ENCODE measurements at regions of chr14 and their contacts with region 1.

Region 1: DNA sequence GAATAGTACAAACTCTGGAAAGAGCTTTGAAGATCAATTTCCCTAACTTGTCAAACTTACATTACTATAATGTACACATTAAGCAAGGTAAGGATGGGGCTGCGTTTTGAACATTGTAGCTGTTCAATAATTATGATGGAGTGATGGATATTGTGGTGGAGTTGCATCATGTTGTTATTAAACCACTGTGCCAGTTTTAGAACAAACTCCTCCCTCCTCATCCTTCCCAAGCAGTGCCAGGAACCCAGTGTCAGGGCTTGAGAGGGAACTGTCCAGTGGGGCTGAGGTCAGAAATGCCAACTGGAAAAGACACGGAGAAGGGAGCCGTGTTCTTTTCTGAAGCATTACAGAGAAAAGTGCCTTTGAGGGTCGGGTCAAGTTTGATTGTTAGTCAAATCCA is 31.9 kb upstream of the PAPOLA start:
- DNase-seq: no peak
- ATAC-seq: no peak
- H3K4me3 ChIP-seq: no peak overlapping the region
- H3K27ac ChIP-seq: no peak overlapping the region
- H3K4me1 ChIP-seq: no peaks in the 10 kb centered on the region
- H3K27me3 ChIP-seq: no peaks in the 10 kb centered on the region; a peak in 1 of 4 replicates
- CTCF ChIP-seq: no peak
- EP300 ChIP-seq: no peak
- POLR2A ChIP-seq: no peak
- RAD21 ChIP-seq: no peak

Region 2: GRCh38 chr14:96027431-96028355 is 442.6 kb before region 1 on chr14:
- CTCF ChIA-PET with region 1: no interaction called
- POLR2A ChIA-PET with region 1: no interaction called
- RAD21 ChIA-PET with region 1: no interaction called
- SMC1A ChIA-PET with region 1: no interaction called
- in situ Hi-C with region 1: no loop called
- intact Hi-C with region 1: no loop called
- DNase-seq: no peak
- ATAC-seq: no peak
- H3K4me3 ChIP-seq: no peak overlapping the region
- H3K27ac ChIP-seq: no peak overlapping the region
- H3K4me1 ChIP-seq: no peaks in the 10 kb centered on the region
- H3K27me3 ChIP-seq: peaks cover 0 to 3% of the 10 kb centered on the region in 2 experiments; a peak in 3 of 4 replicates
- CTCF ChIP-seq: no peak
- EP300 ChIP-seq: no peak
- POLR2A ChIP-seq: no peak
- RAD21 ChIP-seq: no peak

Region 3: DNA sequence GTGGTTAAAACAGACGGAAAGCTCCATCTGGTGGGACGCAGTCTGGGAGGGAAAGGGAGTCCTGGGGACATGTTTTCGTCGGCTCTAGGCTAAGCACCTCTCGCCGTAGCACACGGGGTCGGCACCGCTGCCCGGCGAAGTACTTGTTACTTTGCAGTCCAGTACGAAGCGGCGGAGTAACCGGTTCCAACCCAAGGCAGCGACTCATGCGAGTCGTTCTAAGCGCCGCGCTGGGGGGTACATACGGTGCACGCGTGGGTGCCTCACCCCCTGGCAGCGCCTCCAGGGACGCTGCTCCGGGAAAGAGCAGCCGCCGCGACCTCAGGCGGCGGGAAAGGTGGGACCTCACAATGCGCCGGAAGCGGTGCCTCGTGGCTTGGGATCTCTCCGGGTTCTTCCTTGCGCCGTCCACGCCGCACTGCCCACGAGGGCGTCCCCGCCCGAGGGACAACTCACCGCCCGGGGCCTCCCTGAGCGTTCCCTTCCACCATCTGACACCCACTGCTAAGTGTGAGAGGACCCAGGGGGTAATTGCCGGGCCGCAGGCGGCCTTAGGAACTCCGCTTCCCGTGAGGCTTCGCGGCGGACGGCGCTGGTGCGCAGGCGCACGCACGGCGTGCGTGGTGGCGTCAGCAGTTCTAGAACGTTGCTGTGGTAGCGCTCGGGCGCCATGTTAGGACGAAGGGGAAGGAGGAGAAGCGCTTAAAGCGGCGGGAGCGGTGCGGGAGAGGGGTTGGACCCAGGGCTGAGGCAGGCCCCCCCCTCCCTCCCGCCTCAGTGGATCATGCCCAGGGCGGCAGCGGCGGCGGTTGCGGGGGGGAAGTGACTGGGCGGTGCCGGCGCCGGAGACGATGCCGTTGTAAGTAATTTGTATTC is 31.6 kb after region 1 on chr14 and contains the start of gene PAPOLA:
- CTCF ChIA-PET with region 1: no interaction called
- POLR2A ChIA-PET with region 1: no interaction called
- RAD21 ChIA-PET with region 1: no interaction called
- SMC1A ChIA-PET with region 1: no interaction called
- in situ Hi-C with region 1: no loop called
- intact Hi-C with region 1: no loop called
- DNase-seq: peak; percentile 90
- ATAC-seq: peak; percentile 92
- H3K4me3 ChIP-seq: peak within 1 kb of the TSS; percentile 93
- H3K27ac ChIP-seq: peak within 1 kb of the TSS; percentile 88
- H3K4me1 ChIP-seq: peaks cover 10% of the 10 kb centered on the region
- H3K27me3 ChIP-seq: no peaks in the 10 kb centered on the region
- CTCF ChIP-seq: peak in 2 of 3 experiments; percentile 12 to 17; a peak in 2 of 6 replicates
- EP300 ChIP-seq: 0 out of 4 replicates have a peak, but pooled peaks have one; percentile 6 to 21
- POLR2A ChIP-seq: peak; percentile 91
- RAD21 ChIP-seq: no peak
- polyA plus RNA-seq, gene PAPOLA: 46.0 to 53.2 TPM

Region 4: DNA sequence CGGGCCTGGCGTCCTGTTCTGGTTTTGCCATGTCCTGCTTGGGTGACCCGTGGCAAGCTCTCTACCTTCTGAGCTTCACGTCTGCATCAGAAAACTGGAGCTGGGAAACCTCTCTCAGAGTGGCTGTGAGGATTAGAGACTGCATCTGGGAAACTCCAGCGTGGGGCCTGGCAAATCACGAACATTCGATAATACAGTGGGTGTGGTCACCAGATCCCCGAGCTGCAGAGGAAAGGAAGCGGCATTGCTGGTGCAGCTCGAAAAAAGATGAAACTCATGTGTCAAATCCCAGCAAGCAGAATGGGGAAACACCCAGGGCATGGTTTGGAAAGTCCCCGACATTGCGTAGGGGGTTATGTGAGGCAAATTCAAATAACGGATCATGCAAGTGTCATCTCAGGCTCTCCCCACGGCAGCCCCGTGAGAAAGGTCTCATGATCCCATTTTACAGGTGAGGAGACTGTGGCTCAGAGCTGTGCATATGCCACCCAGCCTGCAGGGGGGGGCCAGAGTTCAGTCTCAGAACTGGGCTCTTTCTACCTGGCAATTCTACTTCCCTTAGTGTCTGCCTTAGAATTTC is 228.7 kb after region 1 on chr14:
- CTCF ChIA-PET with region 1: no interaction called
- POLR2A ChIA-PET with region 1: no interaction called
- RAD21 ChIA-PET with region 1: no interaction called
- SMC1A ChIA-PET with region 1: no interaction called
- in situ Hi-C with region 1: no loop called
- intact Hi-C with region 1: loop called (anchors 5 kb)
- DNase-seq: peak; percentile 86
- ATAC-seq: peak; percentile 94
- H3K4me3 ChIP-seq: no peak overlapping the region
- H3K27ac ChIP-seq: peak overlapping the region; percentile 54
- H3K4me1 ChIP-seq: peaks cover 15% of the 10 kb centered on the region
- H3K27me3 ChIP-seq: no peaks in the 10 kb centered on the region
- CTCF ChIP-seq: peak; percentile 46 to 60 (median 51); a peak in 5 of 6 replicates
- EP300 ChIP-seq: peak in 1 of 2 experiments; percentile 54; a peak in 2 of 4 replicates
- POLR2A ChIP-seq: no peak
- RAD21 ChIP-seq: no peak

Measured in GM12878 (cell line).